ENCODE measurements at regions of chr7 and their contacts with region 1.

Region 1: DNA sequence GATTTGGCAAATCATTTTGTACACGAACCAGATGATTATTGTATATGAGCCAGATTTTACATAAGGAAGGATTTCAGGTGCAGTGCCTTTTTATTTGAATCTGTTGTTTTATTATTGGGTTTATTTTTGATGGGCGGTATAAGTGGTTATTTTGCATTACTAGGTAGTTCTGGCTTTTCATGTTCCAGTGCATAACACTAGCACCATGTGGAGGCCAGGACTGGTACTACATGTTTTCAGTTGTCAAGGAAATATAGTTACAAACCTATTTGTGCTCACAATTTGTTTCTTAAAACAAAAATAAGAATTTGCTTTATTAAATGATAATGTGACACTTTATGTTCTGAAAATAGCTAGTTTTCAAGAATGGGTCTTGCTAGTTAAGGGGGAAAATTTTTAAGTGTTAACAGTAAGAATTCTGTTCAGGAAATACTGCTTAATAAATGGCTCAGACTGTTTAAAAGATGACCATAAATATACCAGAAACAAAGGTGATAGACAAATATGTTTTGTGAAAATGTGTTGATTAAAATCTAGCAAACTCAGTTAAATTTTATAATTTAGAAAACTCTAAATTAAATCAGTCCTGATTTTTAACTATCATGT is 7.1 kb upstream of the SEMA3E start:
- DNase-seq: no peak
- H3K4me3 Mint-ChIP-seq: no peak overlapping the region
- H3K27ac Mint-ChIP-seq: no peak overlapping the region
- H3K4me1 Mint-ChIP-seq: no peaks in the 10 kb centered on the region
- H3K27me3 Mint-ChIP-seq: no peaks in the 10 kb centered on the region

Region 2: DNA sequence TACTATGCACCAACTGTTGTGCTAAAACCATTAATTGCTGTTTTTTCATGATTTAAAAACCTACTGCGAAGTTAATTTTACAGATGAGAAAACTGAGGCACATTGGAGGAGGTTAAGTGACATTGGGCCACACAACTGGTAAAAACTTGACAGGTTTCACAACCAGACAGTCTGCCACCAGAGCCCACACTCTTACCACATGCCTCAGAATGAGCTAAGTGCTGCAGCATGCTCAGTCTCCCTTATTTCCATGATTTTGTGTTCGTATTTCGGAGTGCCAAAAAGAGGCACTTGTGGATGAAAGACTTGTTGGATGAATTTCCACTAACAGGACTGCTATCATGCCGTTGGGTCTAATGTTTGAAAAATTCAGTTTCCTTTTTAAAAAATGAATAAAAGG is 570.8 kb before region 1 on chr7:
- intact Hi-C with region 1: no loop called
- DNase-seq: no peak
- H3K4me3 Mint-ChIP-seq: no peak overlapping the region
- H3K27ac Mint-ChIP-seq: no peak overlapping the region
- H3K4me1 Mint-ChIP-seq: no peaks in the 10 kb centered on the region
- H3K27me3 Mint-ChIP-seq: no peaks in the 10 kb centered on the region

Region 3: DNA sequence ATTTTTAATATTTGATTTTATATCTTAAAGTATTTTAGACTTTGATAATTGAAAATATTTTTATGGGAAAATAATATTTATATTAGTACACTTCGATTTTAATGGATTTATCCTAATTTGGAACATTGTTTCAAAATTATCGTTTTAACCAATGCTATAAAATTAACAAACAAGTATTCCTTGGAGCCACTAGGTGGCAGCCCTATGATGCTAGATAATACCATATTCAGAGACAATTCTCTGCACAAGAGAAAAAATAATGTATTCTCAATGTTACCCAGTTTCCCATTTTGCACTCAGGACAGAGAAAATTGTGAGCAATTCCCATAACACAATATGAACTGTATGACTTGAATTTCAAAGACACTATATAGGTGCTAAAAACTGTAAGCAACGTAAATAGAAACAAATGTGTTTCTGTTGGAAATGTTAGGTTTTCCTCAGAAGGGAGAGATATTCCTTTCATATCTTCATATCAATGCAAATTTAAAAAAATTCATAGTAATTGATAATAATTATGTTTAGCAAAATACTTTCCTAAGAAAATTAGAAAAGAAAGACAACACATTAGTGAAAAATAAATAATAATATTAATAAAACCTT is 245.0 kb before region 1 on chr7:
- intact Hi-C with region 1: loop called (anchors 5 kb)
- DNase-seq: no peak
- H3K4me3 Mint-ChIP-seq: no peak overlapping the region
- H3K27ac Mint-ChIP-seq: no peak overlapping the region
- H3K4me1 Mint-ChIP-seq: no peaks in the 10 kb centered on the region
- H3K27me3 Mint-ChIP-seq: no peaks in the 10 kb centered on the region

Region 4: GRCh38 chr7:83751217-83751616 is 95.2 kb after region 1 on chr7:
- intact Hi-C with region 1: no loop called
- DNase-seq: no peak
- H3K4me3 Mint-ChIP-seq: no peak overlapping the region
- H3K27ac Mint-ChIP-seq: no peak overlapping the region
- H3K4me1 Mint-ChIP-seq: no peaks in the 10 kb centered on the region
- H3K27me3 Mint-ChIP-seq: no peaks in the 10 kb centered on the region